GM12878 (cell line): ENCODE measurements at regions of chr9 and their contacts with region 1.

Region 1: GRCh38 chr9:117411548-117411947 is 3.3 kb downstream of the ASTN2 start:
- DNase-seq: no peak
- ATAC-seq: peak; percentile 93
- H3K4me3 ChIP-seq: no peak overlapping the region
- H3K27ac ChIP-seq: no peak overlapping the region
- H3K4me1 ChIP-seq: no peaks in the 10 kb centered on the region
- H3K27me3 ChIP-seq: peaks cover 8 to 19% of the 10 kb centered on the region in 2 experiments; a peak in 3 of 4 replicates
- CTCF ChIP-seq: peak; percentile 53 to 66 (median 54)
- EP300 ChIP-seq: no peak
- POLR2A ChIP-seq: no peak
- RAD21 ChIP-seq: peak; percentile 57

Region 2: GRCh38 chr9:116910201-116910600 is 501.3 kb before region 1 on chr9:
- CTCF ChIA-PET with region 1: no interaction called
- POLR2A ChIA-PET with region 1: no interaction called
- RAD21 ChIA-PET with region 1: no interaction called
- SMC1A ChIA-PET with region 1: no interaction called
- in situ Hi-C with region 1: no loop called
- intact Hi-C with region 1: loop called (anchors 5 kb)
- DNase-seq: no peak
- ATAC-seq: peak; percentile 57
- H3K4me3 ChIP-seq: no peak overlapping the region
- H3K27ac ChIP-seq: no peak overlapping the region
- H3K4me1 ChIP-seq: no peaks in the 10 kb centered on the region
- H3K27me3 ChIP-seq: no peaks in the 10 kb centered on the region
- CTCF ChIP-seq: peak; percentile 9 to 28 (median 25); a peak in 2 of 6 replicates
- EP300 ChIP-seq: no peak
- POLR2A ChIP-seq: no peak
- RAD21 ChIP-seq: peak; percentile 60

Region 3: DNA sequence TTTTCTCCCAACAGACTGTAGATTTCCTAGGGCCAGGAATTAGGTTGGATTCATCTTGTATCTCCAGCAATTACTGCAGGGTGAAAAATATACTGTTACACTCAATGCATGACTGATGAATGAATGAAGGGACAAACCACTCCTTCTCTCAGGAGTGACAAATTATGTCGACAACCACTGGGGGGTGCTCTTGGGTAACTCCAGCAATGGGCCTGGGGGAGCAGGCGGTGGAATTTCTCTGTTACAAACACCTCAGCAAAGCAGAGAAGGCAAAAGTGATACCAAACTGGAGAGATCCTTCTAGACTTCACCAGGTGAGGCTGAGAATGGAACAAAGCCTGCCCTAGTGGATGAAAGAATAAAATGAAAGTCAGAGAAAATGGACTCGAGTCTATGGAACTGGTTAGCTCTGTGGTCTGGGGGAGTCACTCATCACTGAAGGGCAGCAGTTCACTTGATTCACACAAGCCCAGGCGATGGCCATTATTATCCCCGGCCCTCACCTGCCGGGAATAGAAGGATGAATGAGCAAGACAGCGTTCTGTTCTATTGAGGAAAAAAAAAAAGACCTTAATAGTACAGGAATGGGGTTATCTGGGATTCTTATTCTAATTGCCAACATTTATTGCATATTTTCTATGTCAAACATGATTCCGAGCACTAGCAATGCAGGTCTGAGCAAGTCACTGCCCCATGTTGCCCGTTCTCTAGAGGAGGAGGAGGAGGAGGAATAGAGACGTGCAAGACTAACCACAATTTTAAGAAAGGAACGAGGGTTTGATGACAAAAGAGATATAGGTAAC is 337.8 kb before region 1 on chr9:
- CTCF ChIA-PET with region 1: interaction called, 3 read pairs
- POLR2A ChIA-PET with region 1: no interaction called
- RAD21 ChIA-PET with region 1: no interaction called
- SMC1A ChIA-PET with region 1: no interaction called
- in situ Hi-C with region 1: no loop called
- intact Hi-C with region 1: loop called (anchors 2 kb)
- DNase-seq: no peak
- ATAC-seq: peak; percentile 77
- H3K4me3 ChIP-seq: no peak overlapping the region
- H3K27ac ChIP-seq: no peak overlapping the region
- H3K4me1 ChIP-seq: no peaks in the 10 kb centered on the region
- H3K27me3 ChIP-seq: no peaks in the 10 kb centered on the region; a peak in 1 of 4 replicates
- CTCF ChIP-seq: peak; percentile 43 to 57 (median 47); a peak in 5 of 6 replicates
- EP300 ChIP-seq: no peak
- POLR2A ChIP-seq: no peak
- RAD21 ChIP-seq: peak; percentile 85